Activated B cell treated with CpG ODN at 0.5 μM for 24 hours (primary cell): ENCODE measurements at regions of chr3 and their contacts with region 1.

Region 1: DNA sequence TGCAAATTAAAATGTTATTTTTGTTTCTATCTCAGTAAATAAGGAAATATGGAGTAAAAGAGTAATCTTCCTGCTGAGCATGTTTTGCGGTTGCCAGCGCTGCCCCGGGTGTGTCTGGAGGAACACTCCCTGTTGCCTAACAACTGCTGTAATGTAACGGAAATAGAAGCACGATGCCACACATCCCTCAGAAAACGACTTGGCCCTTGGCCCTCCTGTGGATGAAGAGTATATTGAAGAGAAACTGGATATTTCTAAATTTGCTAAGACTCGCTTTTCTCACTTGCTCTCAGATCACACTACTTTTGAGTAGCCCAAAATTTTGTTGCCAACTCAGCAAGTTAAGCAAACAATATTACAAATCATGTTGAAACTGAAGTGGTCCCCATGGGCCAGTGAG is 18.9 kb downstream of the CX3CR1 start:
- DNase-seq: no peak
- ATAC-seq: peak; percentile 62
- H3K4me3 Mint-ChIP-seq: peak overlapping the region; percentile 52
- H3K27ac Mint-ChIP-seq: peak overlapping the region; percentile 43
- H3K4me1 Mint-ChIP-seq: peaks cover 76% of the 10 kb centered on the region
- H3K27me3 Mint-ChIP-seq: no peaks in the 10 kb centered on the region
- CTCF ChIP-seq: no peak

Region 2: DNA sequence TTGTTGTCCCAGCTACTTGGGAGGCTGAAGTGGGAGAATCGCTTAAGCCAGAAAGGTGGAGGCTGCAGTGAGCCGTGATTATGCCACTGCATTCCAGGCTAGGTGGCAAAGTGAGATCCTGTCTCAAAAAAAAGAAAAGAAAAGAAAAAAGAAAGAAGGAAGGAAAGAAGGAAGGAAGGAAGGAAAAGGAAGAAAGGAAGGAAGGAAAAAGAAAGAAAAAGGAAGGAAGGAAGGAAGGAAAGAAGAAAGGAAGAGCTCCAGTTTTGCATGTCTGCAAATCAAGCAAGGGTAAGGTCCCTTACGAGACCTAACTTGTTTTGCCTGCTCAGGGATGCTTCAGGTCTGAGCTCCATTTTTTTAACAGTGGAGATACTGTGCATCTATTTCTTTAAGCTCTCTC is 64.9 kb before region 1 on chr3:
- CTCF ChIA-PET with region 1: interaction called, 16 read pairs
- POLR2A ChIA-PET with region 1: interaction called, 27 read pairs
- intact Hi-C with region 1: no loop called
- DNase-seq: no peak
- ATAC-seq: no peak
- H3K4me3 Mint-ChIP-seq: no peak overlapping the region
- H3K27ac Mint-ChIP-seq: no peak overlapping the region
- H3K4me1 Mint-ChIP-seq: peaks cover 11% of the 10 kb centered on the region
- H3K27me3 Mint-ChIP-seq: peaks cover 5% of the 10 kb centered on the region
- CTCF ChIP-seq: no peak

Region 3: DNA sequence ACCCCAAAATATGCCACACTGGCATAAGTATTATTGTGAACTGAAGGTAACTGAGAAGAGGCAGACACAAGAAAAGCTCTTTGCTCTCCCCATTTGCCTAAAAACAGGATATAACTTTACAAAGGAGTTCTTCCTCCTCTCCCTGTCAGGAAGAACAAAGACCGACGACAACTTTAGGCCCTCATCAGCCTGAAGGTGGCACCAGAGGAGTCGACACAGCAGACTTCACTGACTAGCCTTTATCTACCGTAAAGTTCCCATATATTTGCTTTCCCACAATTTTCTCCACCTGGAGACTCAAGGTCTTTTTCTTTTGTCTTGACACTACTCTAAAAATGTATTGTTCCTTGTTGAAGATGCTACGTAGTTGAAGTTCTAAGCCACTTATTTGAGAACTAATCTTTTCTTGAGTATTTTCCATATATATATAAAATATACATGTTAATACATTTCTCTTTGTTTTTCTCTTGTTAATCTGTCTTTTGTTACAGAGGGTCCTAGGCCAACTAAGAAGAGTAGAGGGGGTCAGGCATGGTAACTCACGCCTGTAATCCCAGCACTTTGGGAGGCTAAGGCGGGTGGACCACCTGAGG is 52.4 kb before region 1 on chr3:
- CTCF ChIA-PET with region 1: interaction called, 3 read pairs
- POLR2A ChIA-PET with region 1: no interaction called
- intact Hi-C with region 1: loop called (anchors 1 kb)
- DNase-seq: no peak
- ATAC-seq: peak; percentile 58
- H3K4me3 Mint-ChIP-seq: no peak overlapping the region
- H3K27ac Mint-ChIP-seq: no peak overlapping the region
- H3K4me1 Mint-ChIP-seq: peaks cover 8% of the 10 kb centered on the region
- H3K27me3 Mint-ChIP-seq: peaks cover 4% of the 10 kb centered on the region
- CTCF ChIP-seq: peak; percentile 18